CD4-positive, alpha-beta memory T cell (primary cell): ENCODE measurements at regions of chr2 and their contacts with region 1.

Region 1: GRCh38 chr2:231514103-231514950 is 15.9 kb downstream of the NMUR1 start:
- DNase-seq: peak; percentile 98 to 99 (median 99)
- H3K4me3 ChIP-seq: peak overlapping the region; percentile 88 to 90
- H3K4me3 Mint-ChIP-seq: peak overlapping the region; percentile 88 to 91 (median 90)
- H3K27ac ChIP-seq: peak overlapping the region; percentile 87
- H3K27ac Mint-ChIP-seq: peak overlapping the region; percentile 94 to 99 (median 99)
- H3K4me1 ChIP-seq: peaks cover 14% of the 10 kb centered on the region
- H3K4me1 Mint-ChIP-seq: peaks cover 14 to 25% (median 21%) of the 10 kb centered on the region in 4 donors
- H3K27me3 ChIP-seq: no peaks in the 10 kb centered on the region
- H3K27me3 Mint-ChIP-seq: peaks cover 0 to 2% of the 10 kb centered on the region in 2 donors

Region 2: GRCh38 chr2:231482806-231483391 is 31.4 kb before region 1 on chr2:
- CTCF ChIA-PET with region 1: interaction called, 8 read pairs
- POLR2A ChIA-PET with region 1: interaction called, 15 read pairs
- intact Hi-C with region 1: loop called (anchors 1 kb)
- DNase-seq: peak; percentile 61 to 68 (median 65)
- H3K4me3 ChIP-seq: peak overlapping the region; percentile 62 to 65
- H3K4me3 Mint-ChIP-seq: peak overlapping the region; percentile 63 to 87 (median 79)
- H3K27ac ChIP-seq: peak overlapping the region; percentile 80
- H3K27ac Mint-ChIP-seq: peak overlapping the region; percentile 81 to 94 (median 89)
- H3K4me1 ChIP-seq: peaks cover 12% of the 10 kb centered on the region
- H3K4me1 Mint-ChIP-seq: peaks cover 4 to 27% (median 5%) of the 10 kb centered on the region in 4 donors
- H3K27me3 ChIP-seq: no peaks in the 10 kb centered on the region
- H3K27me3 Mint-ChIP-seq: no peaks in the 10 kb centered on the region

Region 3: GRCh38 chr2:231557571-231558237 is 43.4 kb after region 1 on chr2:
- CTCF ChIA-PET with region 1: interaction called, 38 read pairs
- POLR2A ChIA-PET with region 1: interaction called, 3 read pairs
- intact Hi-C with region 1: loop called (anchors 1 kb)
- DNase-seq: peak; percentile 71 to 79 (median 78)
- H3K4me3 ChIP-seq: no peak overlapping the region
- H3K4me3 Mint-ChIP-seq: peak overlapping the region in 2 of 8 donors; percentile 8 to 9
- H3K27ac ChIP-seq: no peak overlapping the region
- H3K27ac Mint-ChIP-seq: peak overlapping the region in 2 of 7 donors; percentile 6 to 72
- H3K4me1 ChIP-seq: peaks cover 9% of the 10 kb centered on the region
- H3K4me1 Mint-ChIP-seq: peaks cover 7 to 29% (median 17%) of the 10 kb centered on the region in 4 donors
- H3K27me3 ChIP-seq: no peaks in the 10 kb centered on the region
- H3K27me3 Mint-ChIP-seq: no peaks in the 10 kb centered on the region

Region 4: DNA sequence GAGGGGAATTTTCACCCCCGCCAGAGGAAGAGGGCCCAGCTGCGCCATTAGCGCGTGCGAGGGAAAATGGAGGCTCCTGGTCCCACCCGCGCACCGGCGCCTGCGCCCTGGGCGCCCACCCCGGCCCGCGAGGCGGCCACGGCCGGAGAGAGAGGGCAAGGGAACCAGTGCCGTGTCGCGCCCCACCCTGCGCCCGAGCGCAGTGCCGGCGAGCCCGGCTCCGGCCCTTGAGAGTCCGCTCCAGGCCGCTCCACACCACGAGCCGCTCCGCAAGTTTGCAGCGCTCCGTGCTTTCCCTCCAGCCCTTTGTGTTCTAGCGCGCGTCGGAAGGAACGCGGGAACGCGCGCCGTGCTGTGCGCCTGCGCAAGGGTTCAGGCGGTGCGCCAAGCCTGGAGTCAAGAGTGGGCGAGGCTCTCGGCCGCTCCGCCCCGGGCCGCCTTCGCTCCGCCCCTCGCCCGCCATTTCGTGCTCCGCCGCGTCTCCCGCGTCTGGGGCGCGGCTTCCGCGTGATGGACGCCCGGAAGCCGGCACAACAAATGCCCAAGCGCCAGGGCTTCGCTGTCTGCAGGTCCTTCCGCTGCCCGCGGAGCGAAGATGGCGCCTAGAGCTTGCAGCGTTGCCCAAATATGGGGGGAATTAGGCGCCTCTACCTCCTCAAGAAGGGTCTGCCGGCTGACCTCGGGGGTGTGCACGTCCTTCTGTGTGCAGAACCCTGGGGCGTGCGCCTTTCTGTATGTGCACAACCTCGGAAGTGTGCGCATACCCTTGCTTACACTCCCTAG is 147.9 kb after region 1 on chr2:
- CTCF ChIA-PET with region 1: no interaction called
- POLR2A ChIA-PET with region 1: no interaction called
- intact Hi-C with region 1: loop called (anchors 1 kb)
- DNase-seq: peak; percentile 93 to 99 (median 99)
- H3K4me3 ChIP-seq: peak overlapping the region; percentile 43 to 60
- H3K4me3 Mint-ChIP-seq: peak overlapping the region; percentile 75 to 86 (median 80)
- H3K27ac ChIP-seq: peak overlapping the region; percentile 86
- H3K27ac Mint-ChIP-seq: peak overlapping the region; percentile 90 to 99 (median 97)
- H3K4me1 ChIP-seq: peaks cover 14% of the 10 kb centered on the region
- H3K4me1 Mint-ChIP-seq: peaks cover 5 to 23% (median 13%) of the 10 kb centered on the region in 4 donors
- H3K27me3 ChIP-seq: no peaks in the 10 kb centered on the region
- H3K27me3 Mint-ChIP-seq: no peaks in the 10 kb centered on the region

Region 5: GRCh38 chr2:231780909-231781797 is 266.8 kb after region 1 on chr2 and contains the start of gene PDE6D:
- CTCF ChIA-PET with region 1: no interaction called
- POLR2A ChIA-PET with region 1: no interaction called
- intact Hi-C with region 1: loop called (anchors 5 kb)
- DNase-seq: peak; percentile 94 to 98 (median 94)
- H3K4me3 ChIP-seq: peak within 1 kb of the TSS; percentile 91 to 96
- H3K4me3 Mint-ChIP-seq: peak within 1 kb of the TSS; percentile 97 to 100 (median 98)
- H3K27ac ChIP-seq: peak within 1 kb of the TSS; percentile 91
- H3K27ac Mint-ChIP-seq: peak within 1 kb of the TSS; percentile 96 to 99 (median 97)
- H3K4me1 ChIP-seq: peaks cover 48% of the 10 kb centered on the region
- H3K4me1 Mint-ChIP-seq: peaks cover 42 to 79% (median 52%) of the 10 kb centered on the region in 4 donors
- H3K27me3 ChIP-seq: no peaks in the 10 kb centered on the region
- H3K27me3 Mint-ChIP-seq: no peaks in the 10 kb centered on the region
- total RNA-seq, gene PDE6D: 29.1 to 30.5 TPM